ENCODE measurements at regions of chr1 and their contacts with region 1.

Region 1: GRCh38 chr1:152052606-152053005 is 15.8 kb upstream of the S100A11 start:
- DNase-seq: peak; percentile 93
- H3K4me3 ChIP-seq: no peak overlapping the region
- H3K27ac ChIP-seq: no peak overlapping the region
- H3K4me1 ChIP-seq: peaks cover 2 to 46% (median 16%) of the 10 kb centered on the region in 6 donors
- H3K27me3 ChIP-seq: peaks cover 0 to 40% (median 4%) of the 10 kb centered on the region in 7 donors
- CTCF ChIP-seq: peak; percentile 88 to 96 (median 92)
- POLR2A ChIP-seq: no peak

Region 2: DNA sequence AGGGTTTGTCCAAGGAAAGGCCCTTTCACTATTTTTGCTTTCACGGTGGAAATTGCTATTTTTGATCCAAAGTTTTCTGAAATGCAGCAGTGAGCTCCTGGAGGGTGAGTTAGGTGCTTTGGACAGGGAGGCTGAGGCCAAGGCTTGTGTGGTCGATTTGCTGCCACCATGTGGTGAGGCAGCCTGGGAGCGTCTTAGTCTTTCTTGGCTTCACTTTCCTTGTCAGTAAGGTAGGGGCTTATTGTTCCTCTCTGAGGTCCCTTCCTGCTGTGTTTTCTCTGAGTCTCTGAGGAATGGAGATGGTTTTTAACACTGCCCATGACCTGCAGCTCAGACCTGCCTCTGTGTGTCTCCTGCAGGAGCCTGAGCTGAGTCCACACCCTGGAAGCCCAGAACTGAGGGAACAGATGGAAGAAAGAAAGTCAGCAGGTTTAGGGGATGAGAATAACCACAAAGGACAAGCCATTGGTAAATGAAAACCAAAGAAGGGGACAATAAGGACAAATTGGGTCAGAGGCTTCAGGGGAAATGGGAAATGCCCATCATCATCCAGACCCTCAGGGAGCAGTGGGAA is 38.9 kb before region 1 on chr1:
- intact Hi-C with region 1: no loop called
- DNase-seq: no peak
- H3K4me3 ChIP-seq: no peak overlapping the region
- H3K27ac ChIP-seq: no peak overlapping the region
- H3K4me1 ChIP-seq: peaks cover 0 to 6% (median 0%) of the 10 kb centered on the region in 6 donors
- H3K27me3 ChIP-seq: peaks cover 0 to 18% (median 0%) of the 10 kb centered on the region in 7 donors
- CTCF ChIP-seq: peak in 9 of 11 experiments; percentile 12 to 60 (median 37)
- POLR2A ChIP-seq: no peak

Region 3: GRCh38 chr1:152459596-152460528 is 407.3 kb after region 1 on chr1:
- intact Hi-C with region 1: loop called (anchors 5 kb)
- DNase-seq: peak; percentile 89
- H3K4me3 ChIP-seq: peak overlapping the region in 2 of 8 donors; percentile 9 to 41
- H3K27ac ChIP-seq: peak overlapping the region; percentile 48 to 83 (median 79)
- H3K4me1 ChIP-seq: peaks cover 0 to 26% (median 13%) of the 10 kb centered on the region in 6 donors
- H3K27me3 ChIP-seq: no peaks in the 10 kb centered on the region
- CTCF ChIP-seq: peak; percentile 41 to 84 (median 69)
- POLR2A ChIP-seq: no peak